Left cardiac atrium (tissue), 4 donors: ENCODE measurements at regions of chr3 and their contacts with region 1.

Region 1: GRCh38 chr3:120450600-120451271 is at the start of gene FSTL1:
- DNase-seq: peak; percentile 81
- ATAC-seq: peak; percentile 86 to 87
- total RNA-seq, gene FSTL1: 376 to 503 TPM

Region 2: DNA sequence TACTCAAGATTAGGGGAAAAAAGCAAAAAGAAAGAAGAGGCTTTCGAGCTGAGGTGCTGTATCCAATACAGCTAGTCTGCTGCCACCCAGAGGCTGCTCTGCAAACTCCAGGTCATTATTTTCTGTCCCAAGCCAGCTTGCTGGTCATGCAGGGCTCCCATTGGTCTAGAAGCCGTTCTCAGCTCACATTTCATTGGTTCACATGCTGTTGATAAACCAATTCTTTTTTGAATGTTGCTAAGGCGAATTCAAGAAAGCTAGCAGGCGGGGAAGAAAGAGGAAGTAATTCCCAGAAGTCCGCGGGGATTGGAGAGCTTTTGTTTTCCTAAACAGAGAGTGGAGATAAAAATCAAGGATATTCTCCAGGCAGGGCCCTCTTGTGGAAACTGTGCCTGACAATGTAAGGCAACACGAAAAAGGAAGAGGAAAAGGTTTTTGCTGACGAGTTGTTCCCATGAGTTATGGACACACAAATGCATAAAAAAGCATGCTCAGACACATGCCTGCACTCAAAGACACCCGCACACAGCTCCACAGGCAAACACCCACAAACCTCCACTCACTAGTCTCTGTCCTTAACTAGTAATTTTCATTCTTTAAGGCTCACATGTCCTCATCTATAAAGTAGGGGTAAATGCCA is 33.3 kb before region 1 on chr3:
- intact Hi-C with region 1: loop called in 1 of 2 experiments (anchors 5 kb)
- DNase-seq: peak; percentile 88
- ATAC-seq: peak; percentile 75 to 85

Region 3: GRCh38 chr3:120506828-120507774 is 56.4 kb after region 1 on chr3:
- intact Hi-C with region 1: loop called in 1 of 2 experiments (anchors 10 kb)
- DNase-seq: no peak
- ATAC-seq: peak; percentile 66 to 75

Region 4: DNA sequence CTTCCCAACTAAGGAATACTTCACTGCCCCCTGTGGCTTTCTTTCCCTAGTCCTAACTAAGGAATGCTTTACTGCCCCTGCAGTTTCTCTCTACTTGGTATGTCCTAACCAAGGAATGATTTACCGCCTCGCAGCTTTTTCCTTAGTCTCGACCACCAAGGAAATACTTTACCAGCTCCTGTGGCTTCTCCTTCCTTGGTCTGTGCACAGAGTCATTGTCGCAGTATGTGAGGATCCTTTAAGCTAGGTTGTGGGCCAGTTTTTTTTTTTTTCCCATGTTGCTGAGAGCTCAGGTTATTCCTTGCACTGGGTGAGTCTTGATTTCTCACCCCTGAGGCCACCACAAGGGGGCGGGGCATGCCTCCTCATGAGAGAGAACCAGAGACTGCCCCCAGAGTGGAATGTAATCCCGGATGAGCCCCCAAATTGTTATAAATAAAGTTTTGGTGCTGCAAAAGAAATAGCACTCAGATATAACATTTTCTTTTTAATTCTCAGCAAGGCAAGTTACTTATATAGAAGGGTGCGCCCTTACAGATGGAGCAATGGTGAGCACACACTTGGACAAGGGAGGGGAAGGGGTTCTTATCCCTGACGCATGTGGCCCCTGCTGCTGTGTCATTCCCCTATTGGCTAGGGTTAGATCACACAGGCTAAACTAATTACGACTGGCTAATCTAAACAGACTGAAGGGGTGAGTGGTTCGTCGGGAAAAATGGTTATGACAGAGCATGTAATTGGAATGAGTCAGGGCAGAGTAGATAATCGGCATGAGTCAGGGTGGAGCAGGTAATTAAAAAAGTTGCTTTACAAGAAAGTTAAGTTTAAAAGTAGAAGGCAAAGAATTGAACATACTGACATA is 172.4 kb after region 1 on chr3:
- intact Hi-C with region 1: no loop called
- DNase-seq: no peak
- ATAC-seq: no peak

Region 5: DNA sequence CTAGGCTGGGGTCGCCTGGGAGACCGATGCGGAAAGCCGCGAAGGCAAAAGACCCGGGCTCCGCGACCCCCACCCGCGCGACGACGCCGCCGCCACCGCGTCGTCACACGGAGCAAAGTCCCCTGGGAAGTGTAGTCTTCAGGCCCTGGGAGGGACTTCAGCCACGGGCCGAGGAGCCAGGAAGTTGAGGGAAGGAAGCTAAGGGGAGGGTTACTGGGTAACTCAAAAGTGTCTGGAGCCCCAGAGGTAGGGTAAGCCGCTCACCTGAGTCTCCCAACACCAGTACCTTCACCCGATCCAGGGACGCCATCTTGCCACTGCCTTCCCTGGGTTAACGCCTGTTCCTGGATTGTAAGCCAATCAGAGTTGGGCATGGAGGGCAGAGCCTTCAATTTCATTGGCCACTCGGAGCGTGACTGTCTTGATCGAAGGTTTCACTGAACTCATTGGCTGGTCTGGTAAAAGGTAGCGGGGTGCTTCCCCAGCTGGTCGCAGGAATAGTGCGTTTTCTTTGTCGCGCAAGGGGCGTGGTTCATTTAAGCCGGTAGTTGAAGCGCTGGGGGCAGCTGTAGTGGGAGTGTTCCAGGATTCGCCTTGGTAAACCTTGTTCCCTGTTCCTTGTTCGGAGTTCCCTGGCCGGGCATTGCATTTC is 291.6 kb after region 1 on chr3 and contains the starts of genes GTF2E1 and RABL3:
- intact Hi-C with region 1: no loop called
- DNase-seq: peak; percentile 96
- ATAC-seq: peak; percentile 100
- total RNA-seq, gene GTF2E1: 13.6 to 13.7 TPM
- total RNA-seq, gene RABL3: 15.2 to 19.4 TPM

Region 6: DNA sequence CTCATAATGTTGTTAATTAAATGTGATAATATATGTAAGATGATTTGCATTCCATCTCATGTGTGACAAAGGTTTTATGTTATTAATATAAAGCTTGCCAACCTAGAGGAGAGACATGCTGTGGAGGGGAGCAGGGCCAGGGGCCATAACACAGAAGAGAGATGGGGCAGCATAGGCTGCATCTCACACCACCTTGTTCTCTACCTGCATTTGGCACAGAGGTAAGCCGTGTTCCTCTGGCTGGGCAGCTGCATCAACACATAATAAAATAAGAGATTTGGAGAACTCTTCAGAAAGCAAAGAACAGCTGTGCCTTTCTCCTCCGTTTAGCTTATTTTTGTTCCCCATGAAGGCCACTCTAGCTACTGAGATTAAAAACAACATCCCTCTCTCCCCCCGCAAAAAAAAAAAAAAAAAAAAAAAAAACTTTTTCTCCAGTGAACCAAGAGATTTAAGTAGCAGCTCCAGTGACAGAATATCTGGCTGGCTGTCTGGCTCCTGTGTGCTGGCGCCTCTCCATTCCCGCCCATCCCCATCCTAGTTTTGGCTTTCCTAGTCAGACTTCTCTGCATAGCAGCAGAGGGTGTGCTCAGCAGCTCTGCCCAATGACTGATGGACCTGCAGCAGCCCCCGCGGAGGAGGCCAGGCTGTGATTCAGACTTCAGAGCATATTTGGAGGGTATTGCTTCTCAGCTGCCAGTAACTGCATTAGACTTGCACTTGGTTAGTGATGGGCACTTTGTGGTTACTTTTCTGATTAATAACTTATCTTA is 405.1 kb after region 1 on chr3:
- intact Hi-C with region 1: no loop called
- DNase-seq: peak; percentile 56
- ATAC-seq: peak; percentile 78 to 99